Ovary (tissue), 10 donors: ENCODE measurements at regions of chr3 and their contacts with region 1.

Region 1: DNA sequence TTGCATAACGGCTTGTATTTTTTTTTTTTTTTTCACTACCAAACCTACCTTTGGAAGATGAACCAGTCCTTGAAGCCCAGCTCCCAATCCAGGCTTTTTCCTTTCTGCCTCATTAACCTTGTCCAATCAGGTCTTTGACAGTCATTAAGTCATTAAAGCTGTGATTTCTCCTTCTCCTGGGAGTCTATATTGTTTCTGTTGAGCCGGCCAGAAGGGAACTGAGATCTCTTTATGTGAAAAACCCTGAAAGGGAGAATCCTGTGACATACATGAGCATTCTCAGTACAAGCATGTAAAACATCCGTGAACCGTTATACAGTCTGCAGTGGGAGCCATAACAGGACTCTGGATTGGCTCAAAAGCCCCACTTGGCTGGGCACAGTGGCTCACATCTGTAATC is 40.0 kb downstream of the ZNF589 start:
- DNase-seq: no peak
- H3K4me3 ChIP-seq: no peak overlapping the region
- H3K27ac ChIP-seq: no peak overlapping the region
- H3K4me1 ChIP-seq: no peaks in the 10 kb centered on the region
- H3K27me3 ChIP-seq: no peaks in the 10 kb centered on the region
- CTCF ChIP-seq: no peak
- EP300 ChIP-seq: no peak
- POLR2A ChIP-seq: no peak

Region 2: DNA sequence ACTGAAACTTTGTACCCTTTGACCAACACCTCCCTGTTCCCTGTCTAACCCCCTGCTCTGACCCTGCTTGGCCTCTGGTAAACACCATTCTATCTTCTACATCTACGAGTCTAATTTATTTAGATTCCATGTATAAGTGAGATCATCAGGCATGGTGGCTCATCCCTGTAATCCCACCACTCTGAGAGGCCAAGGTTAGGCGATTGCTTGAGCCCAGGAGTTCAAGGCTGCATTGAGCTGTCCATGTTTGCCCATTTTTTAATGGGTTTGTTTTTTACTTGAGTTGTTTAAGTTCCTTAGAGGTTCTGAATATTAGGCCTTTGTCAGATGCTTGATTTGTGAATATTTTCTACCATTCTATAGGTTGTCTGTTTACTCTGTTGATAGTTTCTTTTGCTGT is 108.1 kb after region 1 on chr3:
- intact Hi-C with region 1: loop called in 1 of 4 experiments (anchors 5 kb)
- DNase-seq: no peak
- H3K4me3 ChIP-seq: no peak overlapping the region
- H3K27ac ChIP-seq: no peak overlapping the region
- H3K4me1 ChIP-seq: no peaks in the 10 kb centered on the region
- H3K27me3 ChIP-seq: no peaks in the 10 kb centered on the region
- CTCF ChIP-seq: no peak
- EP300 ChIP-seq: no peak
- POLR2A ChIP-seq: no peak